ENCODE measurements at regions of chr10 and their contacts with region 1.

Region 1: GRCh38 chr10:80205478-80206276 is at the start of gene ANXA11:
- DNase-seq: peak; percentile 92
- ATAC-seq: peak; percentile 63
- H3K4me3 Mint-ChIP-seq: peak within 1 kb of the TSS; percentile 86
- H3K27ac Mint-ChIP-seq: peak within 1 kb of the TSS; percentile 95
- H3K4me1 Mint-ChIP-seq: peaks cover 43% of the 10 kb centered on the region
- H3K27me3 Mint-ChIP-seq: no peaks in the 10 kb centered on the region
- total RNA-seq, gene ANXA11: 256 to 348 TPM

Region 2: GRCh38 chr10:79445141-79445976 is 760.3 kb before region 1 on chr10 and contains the start of gene ZCCHC24:
- CTCF ChIA-PET with region 1: no interaction called
- POLR2A ChIA-PET with region 1: no interaction called
- intact Hi-C with region 1: loop called in 1 of 2 experiments (anchors 5 kb)
- DNase-seq: peak; percentile 93
- ATAC-seq: peak; percentile 97
- H3K4me3 Mint-ChIP-seq: peak within 1 kb of the TSS; percentile 65
- H3K27ac Mint-ChIP-seq: no peak within 1 kb of the TSS
- H3K4me1 Mint-ChIP-seq: peaks cover 16% of the 10 kb centered on the region
- H3K27me3 Mint-ChIP-seq: peaks cover 7% of the 10 kb centered on the region
- total RNA-seq, gene ZCCHC24: 0.53 to 0.75 TPM

Region 3: DNA sequence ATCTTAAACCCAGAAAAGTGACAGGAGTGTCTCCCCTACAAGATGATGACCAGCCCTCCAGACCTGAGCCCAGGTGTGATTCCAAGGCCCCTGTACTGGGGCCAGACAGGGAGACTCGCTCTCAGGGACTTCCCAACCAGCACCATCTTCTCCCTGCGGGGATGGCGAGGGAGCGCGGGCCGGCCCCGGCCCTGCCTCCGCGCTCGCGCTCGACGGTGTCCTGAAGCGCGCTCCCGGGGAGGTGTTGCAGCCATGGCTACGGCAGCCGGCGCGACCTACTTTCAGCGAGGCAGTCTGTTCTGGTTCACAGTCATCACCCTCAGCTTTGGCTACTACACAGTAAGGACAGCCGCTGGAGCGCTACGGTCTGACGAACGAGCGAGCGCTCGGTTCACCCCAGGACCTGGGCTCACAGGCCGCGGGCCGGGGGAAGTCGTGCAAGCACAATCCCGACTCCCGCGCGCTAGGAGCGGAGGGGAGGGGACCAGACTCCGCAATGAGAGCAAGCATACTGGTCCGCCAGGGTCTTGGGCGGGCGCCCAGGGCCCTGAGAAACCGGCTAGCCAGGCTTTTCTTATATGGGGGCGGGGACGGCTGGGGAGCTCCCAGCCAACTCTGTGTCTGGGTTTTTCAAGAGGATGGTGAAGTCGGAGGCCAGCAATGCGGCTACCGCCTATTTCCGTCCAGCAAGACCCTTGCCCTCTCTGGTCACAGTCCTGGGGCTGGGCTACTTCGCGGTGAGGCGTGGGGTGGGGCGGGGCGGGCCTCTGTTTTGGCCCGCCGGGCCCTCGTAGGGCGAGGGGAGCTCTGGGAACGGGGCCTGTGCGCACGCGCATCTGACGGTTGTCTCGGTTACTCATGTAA is 127.0 kb before region 1 on chr10 and contains the start of gene TMEM254:
- CTCF ChIA-PET with region 1: no interaction called
- POLR2A ChIA-PET with region 1: interaction called, 3 read pairs
- intact Hi-C with region 1: loop called (anchors 1 kb)
- DNase-seq: peak; percentile 95
- ATAC-seq: peak; percentile 74
- H3K4me3 Mint-ChIP-seq: peak within 1 kb of the TSS; percentile 93
- H3K27ac Mint-ChIP-seq: peak within 1 kb of the TSS; percentile 96
- H3K4me1 Mint-ChIP-seq: peaks cover 32% of the 10 kb centered on the region
- H3K27me3 Mint-ChIP-seq: no peaks in the 10 kb centered on the region
- total RNA-seq, gene TMEM254: 11.3 to 15.2 TPM

Region 4: GRCh38 chr10:80132299-80133139 is 73.2 kb before region 1 on chr10 and contains the start of gene PLAC9:
- CTCF ChIA-PET with region 1: no interaction called
- POLR2A ChIA-PET with region 1: no interaction called
- intact Hi-C with region 1: no loop called
- DNase-seq: no peak
- ATAC-seq: no peak
- H3K4me3 Mint-ChIP-seq: no peak within 1 kb of the TSS
- H3K27ac Mint-ChIP-seq: no peak within 1 kb of the TSS
- H3K4me1 Mint-ChIP-seq: peaks cover 4% of the 10 kb centered on the region
- H3K27me3 Mint-ChIP-seq: peaks cover 24% of the 10 kb centered on the region
- total RNA-seq, gene PLAC9: not detected

Region 5: GRCh38 chr10:80144067-80144695 is 61.5 kb before region 1 on chr10:
- CTCF ChIA-PET with region 1: interaction called, 30 read pairs
- POLR2A ChIA-PET with region 1: interaction called, 4 read pairs
- intact Hi-C with region 1: loop called (anchors 1 to 5 kb)
- DNase-seq: peak; percentile 65
- ATAC-seq: peak; percentile 73
- H3K4me3 Mint-ChIP-seq: peak overlapping the region; percentile 61
- H3K27ac Mint-ChIP-seq: peak overlapping the region; percentile 52
- H3K4me1 Mint-ChIP-seq: peaks cover 13% of the 10 kb centered on the region
- H3K27me3 Mint-ChIP-seq: peaks cover 2% of the 10 kb centered on the region

Region 6: DNA sequence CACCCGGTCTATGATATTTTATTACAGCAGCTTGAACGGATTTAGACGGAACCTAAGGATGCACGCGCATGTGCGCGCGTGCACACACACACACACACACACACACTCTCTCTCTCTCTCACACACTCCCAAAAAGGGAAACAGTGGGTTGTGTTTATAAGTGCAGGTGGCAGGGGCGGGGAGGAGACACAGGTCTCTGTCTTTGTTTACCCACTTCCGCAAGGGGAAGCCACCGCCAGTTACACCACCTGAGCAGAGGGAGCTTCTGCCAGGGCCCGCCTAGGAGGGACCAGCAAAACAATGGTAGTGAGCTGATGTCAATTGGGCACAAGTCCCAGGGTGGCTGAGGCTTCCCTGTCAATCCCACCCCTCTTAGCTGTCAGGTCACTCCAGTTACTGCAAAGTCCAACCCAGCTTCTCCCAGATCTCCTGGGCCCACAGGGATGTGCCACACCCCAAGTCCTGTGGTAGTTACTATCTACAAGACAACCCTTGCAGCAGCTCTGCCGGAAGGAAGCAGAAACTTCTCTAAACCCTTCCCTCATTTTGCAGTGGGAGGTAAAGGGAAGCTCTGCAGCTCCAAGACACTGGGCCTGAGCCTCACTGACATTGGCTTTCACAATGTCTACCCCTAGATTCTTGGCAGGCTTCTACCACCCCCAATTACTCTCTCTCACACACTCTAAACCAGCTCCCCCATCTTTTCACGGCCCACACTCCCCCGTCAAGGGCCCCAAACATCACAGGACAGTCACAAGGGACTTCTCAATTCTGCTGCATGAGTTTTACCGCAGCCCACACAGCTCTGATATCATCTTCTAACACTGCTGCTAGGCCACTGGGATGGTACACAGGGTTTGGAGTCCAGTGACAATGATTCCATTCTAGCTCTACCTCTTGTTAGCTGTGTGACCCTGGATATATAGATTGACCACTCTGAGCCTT is 17.9 kb before region 1 on chr10:
- CTCF ChIA-PET with region 1: interaction called, 12 read pairs
- POLR2A ChIA-PET with region 1: interaction called, 22 read pairs
- intact Hi-C with region 1: loop called (anchors 1 kb)
- DNase-seq: peak; percentile 88
- ATAC-seq: peak; percentile 80
- H3K4me3 Mint-ChIP-seq: peak overlapping the region; percentile 60
- H3K27ac Mint-ChIP-seq: peak overlapping the region; percentile 91
- H3K4me1 Mint-ChIP-seq: peaks cover 85% of the 10 kb centered on the region
- H3K27me3 Mint-ChIP-seq: no peaks in the 10 kb centered on the region

Region 7: DNA sequence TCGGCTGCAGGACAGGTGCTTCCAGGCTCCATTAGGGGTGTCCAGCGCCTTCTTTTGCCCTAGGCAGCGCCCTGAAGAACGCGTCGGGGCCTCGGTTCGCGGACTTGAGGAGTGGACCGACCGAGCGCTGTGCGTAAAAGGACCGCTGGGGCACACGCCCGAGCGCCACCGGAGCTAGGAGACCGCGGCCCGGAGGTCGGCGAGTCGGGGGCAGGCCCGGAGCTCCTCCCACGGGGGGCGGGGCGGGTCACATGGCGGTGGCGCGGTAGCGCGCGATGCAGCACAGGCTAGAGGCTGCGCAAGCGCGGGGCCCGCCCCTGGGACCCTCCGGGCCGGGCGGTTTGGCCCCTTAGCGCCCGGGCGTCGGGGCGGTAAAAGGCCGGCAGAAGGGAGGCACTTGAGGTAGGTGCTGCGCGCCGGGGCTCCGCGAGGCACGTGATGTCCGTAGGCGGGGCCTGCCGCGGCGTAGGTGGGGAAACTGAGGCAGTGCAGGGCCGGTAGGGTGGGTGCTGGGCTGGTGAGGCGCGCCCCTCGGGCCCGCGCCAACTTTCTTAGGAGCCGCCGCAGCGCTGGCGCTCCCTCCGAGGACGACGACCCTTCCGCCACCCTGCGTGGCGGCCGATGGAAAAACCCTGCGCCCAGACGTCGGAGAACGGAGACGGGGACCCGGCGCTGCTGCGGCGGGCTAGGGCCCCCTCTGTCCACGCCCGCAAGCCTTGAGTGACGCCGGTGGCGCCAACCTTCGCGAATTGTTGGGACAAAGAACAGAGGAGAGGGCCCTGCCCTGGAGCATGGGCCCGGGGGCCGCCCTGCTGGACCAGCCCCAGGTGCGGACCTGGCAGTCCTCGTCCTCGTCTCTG is 202.8 kb after region 1 on chr10 and contains the start of gene PRXL2A:
- CTCF ChIA-PET with region 1: no interaction called
- POLR2A ChIA-PET with region 1: no interaction called
- intact Hi-C with region 1: loop called in 1 of 2 experiments (anchors 5 kb)
- DNase-seq: peak; percentile 91
- ATAC-seq: peak; percentile 84
- H3K4me3 Mint-ChIP-seq: peak within 1 kb of the TSS; percentile 76
- H3K27ac Mint-ChIP-seq: peak within 1 kb of the TSS; percentile 94
- H3K4me1 Mint-ChIP-seq: peaks cover 40% of the 10 kb centered on the region
- H3K27me3 Mint-ChIP-seq: no peaks in the 10 kb centered on the region
- total RNA-seq, gene PRXL2A: 15.0 to 17.6 TPM